ENCODE measurements at regions of chr2 and their contacts with region 1.

Region 1: DNA sequence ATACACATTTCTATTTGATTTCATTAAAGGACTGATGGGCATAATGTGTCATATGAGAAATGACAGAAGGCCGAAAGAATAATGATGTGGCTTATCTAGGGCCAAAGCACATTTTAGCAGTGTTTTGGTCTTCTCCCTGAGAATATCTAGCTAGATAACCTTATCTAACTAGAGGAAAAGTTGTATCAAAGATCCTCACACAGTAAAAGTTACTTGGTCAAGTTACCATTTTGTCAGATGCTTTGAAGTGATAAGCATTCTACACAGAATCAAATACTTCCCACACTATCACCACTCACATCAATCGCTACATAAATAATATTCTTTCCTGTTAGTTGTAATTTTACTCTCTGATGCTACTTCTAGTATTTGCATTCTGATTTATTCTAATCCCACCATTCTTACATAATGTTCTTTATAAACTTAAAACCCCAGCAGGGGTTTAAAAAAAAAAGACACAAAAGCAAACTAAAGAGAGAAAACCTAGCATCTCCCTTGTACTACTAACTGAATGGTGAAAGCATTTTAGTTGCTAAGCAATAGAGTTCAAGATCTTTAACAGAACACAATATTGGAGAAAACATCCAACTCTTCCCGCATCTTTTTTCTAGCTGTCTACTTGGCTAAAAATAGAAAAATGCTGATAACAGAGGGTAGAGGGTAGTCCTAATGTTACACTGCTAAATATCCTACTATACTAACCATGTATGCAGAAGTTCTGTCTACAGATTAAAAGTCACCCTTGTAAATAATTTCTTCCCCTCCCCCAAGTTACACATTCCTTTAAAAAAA is 8.0 kb downstream of the XPO1 start:
- DNase-seq: no peak
- ATAC-seq: no peak
- H3K4me3 ChIP-seq: no peak overlapping the region
- H3K4me3 Mint-ChIP-seq: no peak overlapping the region
- H3K27ac ChIP-seq: no peak overlapping the region
- H3K27ac Mint-ChIP-seq: peak overlapping the region; percentile 44
- H3K4me1 ChIP-seq: peaks cover 16% of the 10 kb centered on the region
- H3K4me1 Mint-ChIP-seq: peaks cover 50% of the 10 kb centered on the region
- H3K27me3 ChIP-seq: no peaks in the 10 kb centered on the region
- H3K27me3 Mint-ChIP-seq: no peaks in the 10 kb centered on the region
- CTCF ChIP-seq: no peak

Region 2: GRCh38 chr2:60961501-60961900 is 568.6 kb before region 1 on chr2:
- CTCF ChIA-PET with region 1: no interaction called
- POLR2A ChIA-PET with region 1: no interaction called
- intact Hi-C with region 1: no loop called
- DNase-seq: no peak
- ATAC-seq: no peak
- H3K4me3 ChIP-seq: no peak overlapping the region
- H3K4me3 Mint-ChIP-seq: no peak overlapping the region
- H3K27ac ChIP-seq: no peak overlapping the region
- H3K27ac Mint-ChIP-seq: no peak overlapping the region
- H3K4me1 ChIP-seq: no peaks in the 10 kb centered on the region
- H3K4me1 Mint-ChIP-seq: peaks cover 37% of the 10 kb centered on the region
- H3K27me3 ChIP-seq: no peaks in the 10 kb centered on the region
- H3K27me3 Mint-ChIP-seq: no peaks in the 10 kb centered on the region
- CTCF ChIP-seq: no peak

Region 3: DNA sequence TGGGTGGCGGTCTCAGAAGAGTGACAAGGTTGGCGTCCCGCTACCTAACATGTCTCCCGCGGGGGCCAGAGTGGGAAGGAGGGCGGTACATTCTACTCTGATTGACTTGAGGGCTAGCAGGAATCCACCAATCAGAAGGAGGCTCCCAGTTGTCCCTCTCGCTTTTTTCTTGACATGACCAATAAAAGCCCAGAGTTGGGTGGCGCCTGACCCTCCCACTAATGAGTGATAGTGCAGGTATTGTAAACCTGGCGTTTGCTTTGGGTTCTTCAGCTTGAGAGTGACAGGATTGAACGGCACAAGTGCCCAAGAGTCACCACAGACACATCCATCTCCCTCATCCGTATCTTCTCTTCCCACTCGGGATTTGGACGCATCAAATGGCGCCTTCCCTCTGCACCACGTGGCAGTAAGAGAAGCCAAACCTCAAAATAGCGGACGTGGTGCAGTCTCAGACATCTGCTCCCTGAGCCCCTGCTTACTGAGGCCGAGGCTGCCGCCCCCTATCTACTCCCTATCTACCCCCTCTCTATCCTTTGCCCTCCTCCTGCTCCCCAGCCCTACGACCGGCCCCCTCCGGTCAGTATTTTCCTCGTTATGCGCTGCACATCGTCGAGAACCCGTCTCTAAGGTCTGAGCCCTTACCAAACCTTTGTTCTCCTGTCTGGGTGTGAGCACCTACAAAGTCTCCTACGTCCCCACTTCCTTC is 324.5 kb after region 1 on chr2:
- CTCF ChIA-PET with region 1: no interaction called
- POLR2A ChIA-PET with region 1: no interaction called
- intact Hi-C with region 1: loop called (anchors 5 to 10 kb)
- DNase-seq: peak; percentile 75 to 97 (median 83)
- ATAC-seq: peak; percentile 91
- H3K4me3 ChIP-seq: peak overlapping the region; percentile 98
- H3K4me3 Mint-ChIP-seq: peak overlapping the region; percentile 97
- H3K27ac ChIP-seq: peak overlapping the region; percentile 65 to 79
- H3K27ac Mint-ChIP-seq: peak overlapping the region; percentile 94
- H3K4me1 ChIP-seq: peaks cover 14% of the 10 kb centered on the region
- H3K4me1 Mint-ChIP-seq: peaks cover 16% of the 10 kb centered on the region
- H3K27me3 ChIP-seq: no peaks in the 10 kb centered on the region
- H3K27me3 Mint-ChIP-seq: no peaks in the 10 kb centered on the region
- CTCF ChIP-seq: no peak

Region 4: GRCh38 chr2:61905372-61906185 is 375.4 kb after region 1 on chr2 and contains the start of gene COMMD1:
- CTCF ChIA-PET with region 1: no interaction called
- POLR2A ChIA-PET with region 1: no interaction called
- intact Hi-C with region 1: no loop called
- DNase-seq: peak; percentile 60 to 89 (median 74)
- ATAC-seq: peak; percentile 97
- H3K4me3 ChIP-seq: peak within 1 kb of the TSS; percentile 92
- H3K4me3 Mint-ChIP-seq: peak within 1 kb of the TSS; percentile 96
- H3K27ac ChIP-seq: peak within 1 kb of the TSS; percentile 23 to 38
- H3K27ac Mint-ChIP-seq: peak within 1 kb of the TSS; percentile 88
- H3K4me1 ChIP-seq: peaks cover 10% of the 10 kb centered on the region
- H3K4me1 Mint-ChIP-seq: peaks cover 22% of the 10 kb centered on the region
- H3K27me3 ChIP-seq: no peaks in the 10 kb centered on the region
- H3K27me3 Mint-ChIP-seq: no peaks in the 10 kb centered on the region
- CTCF ChIP-seq: no peak
- total RNA-seq, gene COMMD1: 11.5 to 13.2 TPM

Measured in CD4-positive, alpha-beta T cell (primary cell).